Activated T-helper 2 cell treated with anti-CD3 and anti-CD28 coated beads, Interferon-gamma antibody, Interleukin-2, Interleukin-4, amounts not matched to agents 10 μg/mL and 5 μg/mL and 100 μg/mL, durations not matched to agents 14 hours and 24 hours and 36 hours (primary cell): ENCODE measurements at regions of chr10 and their contacts with region 1.

Region 1: GRCh38 chr10:79242620-79243152 is 104.6 kb upstream of the PPIF start:
- DNase-seq: peak; percentile 66
- H3K4me3 Mint-ChIP-seq: peak overlapping the region; percentile 78
- H3K27ac Mint-ChIP-seq: peak overlapping the region; percentile 78
- H3K4me1 Mint-ChIP-seq: peaks cover 56% of the 10 kb centered on the region
- H3K27me3 Mint-ChIP-seq: no peaks in the 10 kb centered on the region

Region 2: DNA sequence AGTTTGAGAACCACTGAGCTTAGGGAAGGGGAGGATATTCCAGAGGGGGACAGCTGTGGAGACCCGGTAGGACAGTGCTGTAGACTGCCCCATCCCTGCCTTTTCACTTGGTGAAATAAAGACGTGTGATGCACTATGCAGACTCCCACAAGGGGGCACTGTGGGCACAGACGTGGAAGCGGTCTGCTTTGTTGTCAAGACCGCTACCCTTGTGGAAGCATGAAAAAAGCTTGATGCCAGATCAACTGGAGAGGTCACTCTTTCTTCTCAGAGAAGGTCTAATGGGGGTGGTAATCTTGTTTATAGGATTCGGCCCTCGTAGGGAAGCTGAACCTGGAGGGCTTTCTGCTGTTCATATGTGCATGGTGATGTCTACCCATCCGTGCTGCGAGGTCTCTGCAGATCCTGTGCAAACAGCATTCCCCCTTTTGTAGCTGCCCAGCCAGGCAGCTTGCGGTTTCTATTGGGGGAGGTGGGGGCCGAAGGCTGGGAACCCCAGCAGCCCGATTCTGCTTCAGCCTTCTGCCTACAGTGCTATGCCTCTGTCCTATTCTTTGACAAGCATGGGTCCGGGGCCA is 1195.3 kb before region 1 on chr10:
- intact Hi-C with region 1: loop called (anchors 5 kb)
- DNase-seq: peak; percentile 68
- H3K4me3 Mint-ChIP-seq: no peak overlapping the region
- H3K27ac Mint-ChIP-seq: no peak overlapping the region
- H3K4me1 Mint-ChIP-seq: peaks cover 10% of the 10 kb centered on the region
- H3K27me3 Mint-ChIP-seq: no peaks in the 10 kb centered on the region

Region 3: GRCh38 chr10:79068562-79069324 is 173.9 kb before region 1 on chr10 and contains the start of gene ZMIZ1:
- intact Hi-C with region 1: loop called (anchors 5 kb)
- DNase-seq: peak; percentile 81
- H3K4me3 Mint-ChIP-seq: peak within 1 kb of the TSS; percentile 86
- H3K27ac Mint-ChIP-seq: peak within 1 kb of the TSS; percentile 80
- H3K4me1 Mint-ChIP-seq: peaks cover 29% of the 10 kb centered on the region
- H3K27me3 Mint-ChIP-seq: peaks cover 13% of the 10 kb centered on the region
- total RNA-seq, gene ZMIZ1: 79.2 and 80.4 TPM in 2 replicates

Region 4: DNA sequence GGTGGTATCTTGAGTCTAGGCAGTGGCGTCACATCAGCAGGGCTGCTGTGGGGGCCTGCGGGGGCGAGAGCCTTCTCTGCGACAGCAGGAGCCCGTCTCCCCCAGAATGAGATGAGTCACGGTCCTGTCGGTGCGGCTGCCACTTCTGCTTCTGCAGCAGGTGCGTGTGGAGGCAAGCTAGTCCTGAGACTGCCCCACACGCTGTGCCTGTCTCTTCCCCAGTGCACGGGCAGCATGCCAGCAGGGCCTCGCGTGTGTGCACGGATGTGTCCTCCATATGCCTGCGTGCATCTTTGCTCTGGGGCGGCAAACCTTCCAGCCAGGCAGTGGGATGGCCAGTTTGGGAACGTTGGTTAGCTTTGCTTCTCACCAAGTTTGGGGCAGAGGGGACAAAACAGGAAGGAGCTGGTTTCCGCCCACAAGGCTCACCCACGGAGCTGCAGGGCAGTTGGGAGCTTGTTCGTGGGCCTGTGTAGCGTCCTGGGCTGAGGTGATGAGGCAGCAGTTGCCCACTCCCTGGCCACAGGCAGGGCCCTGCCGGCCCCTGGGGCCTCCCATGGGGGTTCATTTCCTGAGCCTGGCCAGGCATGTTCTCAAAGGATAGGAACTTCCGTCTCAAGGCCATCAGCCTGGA is 43.7 kb after region 1 on chr10:
- intact Hi-C with region 1: loop called (anchors 1 kb)
- DNase-seq: peak; percentile 70
- H3K4me3 Mint-ChIP-seq: peak overlapping the region; percentile 65
- H3K27ac Mint-ChIP-seq: peak overlapping the region; percentile 93
- H3K4me1 Mint-ChIP-seq: peaks cover 53% of the 10 kb centered on the region
- H3K27me3 Mint-ChIP-seq: no peaks in the 10 kb centered on the region

Region 5: DNA sequence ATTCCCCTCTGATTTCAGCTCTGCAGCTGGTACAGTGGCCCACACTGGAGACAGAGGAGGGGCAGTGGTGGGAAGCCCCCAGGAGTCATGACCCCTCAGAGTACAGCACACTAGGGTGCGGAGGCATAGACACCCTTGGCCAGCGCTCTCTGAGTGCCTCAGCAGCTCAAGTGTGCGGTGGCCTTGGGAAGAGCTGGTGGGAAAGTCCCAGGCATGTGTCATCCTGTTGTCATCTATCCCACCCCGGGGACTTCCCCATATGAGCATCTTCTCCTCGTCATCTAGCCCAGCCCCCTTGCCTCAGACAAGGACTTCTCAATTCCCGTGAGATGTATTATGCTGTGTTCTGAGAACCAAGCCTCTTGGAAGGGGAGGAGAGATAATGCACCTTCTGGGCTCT is 89.0 kb after region 1 on chr10:
- intact Hi-C with region 1: loop called (anchors 5 kb)
- DNase-seq: peak; percentile 71
- H3K4me3 Mint-ChIP-seq: peak overlapping the region; percentile 11
- H3K27ac Mint-ChIP-seq: peak overlapping the region; percentile 90
- H3K4me1 Mint-ChIP-seq: peaks cover 37% of the 10 kb centered on the region
- H3K27me3 Mint-ChIP-seq: no peaks in the 10 kb centered on the region